Psoas muscle (tissue), 8 donors: ENCODE measurements at regions of chr9 and their contacts with region 1.

Region 1: DNA sequence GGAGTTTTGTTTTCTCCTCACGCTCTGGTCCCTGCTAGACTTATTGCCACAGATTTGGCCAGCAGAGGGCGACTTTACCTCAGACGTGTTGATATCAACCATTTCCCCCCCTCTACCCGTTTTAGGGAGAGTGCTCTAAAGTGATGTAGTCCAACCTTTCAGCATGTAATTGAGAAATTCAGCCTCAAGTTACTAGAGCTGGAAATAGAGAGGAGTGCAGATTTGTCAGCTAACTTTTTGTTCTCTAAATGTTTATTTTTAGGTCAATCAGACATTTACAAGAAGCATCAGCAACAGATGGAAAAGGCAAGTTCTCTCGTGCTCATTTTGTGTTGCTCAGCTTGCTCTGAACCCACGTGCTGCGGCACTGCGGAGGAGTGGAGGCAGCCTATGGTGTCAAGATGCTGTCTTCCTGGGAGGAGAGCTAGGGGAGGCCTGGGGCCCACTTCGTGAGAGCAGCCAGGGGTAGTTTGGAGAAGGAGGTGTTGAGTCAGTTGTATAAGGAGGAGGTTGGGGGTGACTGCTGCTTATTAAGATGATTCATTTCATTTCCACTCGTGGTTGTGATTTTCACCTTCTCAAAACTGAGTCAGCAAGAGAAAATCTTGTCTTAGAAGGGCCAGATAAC is 53.6 kb downstream of the GPR107 start:
- DNase-seq: peak; percentile 80 to 88
- ATAC-seq: peak; percentile 71 to 84 (median 80)
- H3K4me3 ChIP-seq: no peak overlapping the region
- H3K27ac ChIP-seq: no peak overlapping the region
- H3K4me1 ChIP-seq: no peaks in the 10 kb centered on the region
- H3K27me3 ChIP-seq: no peaks in the 10 kb centered on the region
- CTCF ChIP-seq: peak; percentile 71

Region 2: GRCh38 chr9:130235897-130236668 is 128.7 kb after region 1 on chr9:
- intact Hi-C with region 1: loop called (anchors 1 to 2 kb)
- DNase-seq: peak; percentile 67 to 82
- ATAC-seq: peak; percentile 59 to 85 (median 66)
- H3K4me3 ChIP-seq: peak overlapping the region; percentile 4
- H3K27ac ChIP-seq: no peak overlapping the region
- H3K4me1 ChIP-seq: no peaks in the 10 kb centered on the region
- H3K27me3 ChIP-seq: no peaks in the 10 kb centered on the region
- CTCF ChIP-seq: peak; percentile 99

Region 3: GRCh38 chr9:130343445-130343918 is 236.1 kb after region 1 on chr9:
- intact Hi-C with region 1: loop called in 1 of 2 experiments (anchors 10 kb)
- DNase-seq: peak in 1 of 2 donors; percentile 58
- ATAC-seq: peak in 1 of 4 donors; percentile 32
- H3K4me3 ChIP-seq: no peak overlapping the region
- H3K27ac ChIP-seq: no peak overlapping the region
- H3K4me1 ChIP-seq: no peaks in the 10 kb centered on the region
- H3K27me3 ChIP-seq: peaks cover 0 to 19% (median 6%) of the 10 kb centered on the region in 3 donors
- CTCF ChIP-seq: peak; percentile 51